ENCODE measurements at regions of chr9 and their contacts with region 1.

Region 1: GRCh38 chr9:118459913-118460312 is 755.7 kb downstream of the TLR4 start:
- DNase-seq: peak in 1 of 2 donors; percentile 6
- ATAC-seq: peak in 7 of 8 donors; percentile 59 to 94 (median 66)
- H3K4me3 ChIP-seq: no peak overlapping the region
- H3K27ac ChIP-seq: peak overlapping the region in 2 of 10 donors; percentile 33 to 39
- H3K4me1 ChIP-seq: no peaks in the 10 kb centered on the region
- H3K27me3 ChIP-seq: no peaks in the 10 kb centered on the region
- CTCF ChIP-seq: no peak

Region 2: DNA sequence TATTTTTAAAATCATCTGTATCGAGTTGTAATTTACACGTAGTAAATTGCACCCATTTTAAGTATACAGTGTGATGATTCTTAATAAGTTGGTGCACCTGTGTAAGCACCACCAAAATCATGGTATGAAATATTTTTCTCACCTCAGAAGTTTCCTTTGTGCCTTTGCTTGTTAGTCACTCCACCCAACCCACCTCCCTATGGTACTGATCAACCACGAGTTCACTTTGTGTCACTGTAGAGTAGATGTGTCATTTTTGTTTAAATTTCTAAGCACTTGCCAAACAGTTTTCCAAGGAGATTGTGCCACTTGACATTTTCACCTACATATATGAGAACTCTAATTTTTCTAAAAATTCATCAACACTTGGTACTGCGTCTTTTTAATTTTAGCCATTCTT is 50.8 kb after region 1 on chr9:
- intact Hi-C with region 1: loop called in 1 of 10 experiments (anchors 10 kb)
- DNase-seq: no peak
- ATAC-seq: no peak
- H3K4me3 ChIP-seq: no peak overlapping the region
- H3K27ac ChIP-seq: no peak overlapping the region
- H3K4me1 ChIP-seq: no peaks in the 10 kb centered on the region
- H3K27me3 ChIP-seq: no peaks in the 10 kb centered on the region
- CTCF ChIP-seq: no peak

Region 3: GRCh38 chr9:118529210-118529609 is 69.3 kb after region 1 on chr9:
- intact Hi-C with region 1: no loop called
- DNase-seq: peak in 1 of 2 donors; percentile 32
- ATAC-seq: peak; percentile 38 to 96 (median 84)
- H3K4me3 ChIP-seq: no peak overlapping the region
- H3K27ac ChIP-seq: peak overlapping the region in 7 of 10 donors; percentile 7 to 69 (median 50)
- H3K4me1 ChIP-seq: peaks cover 0 to 22% (median 11%) of the 10 kb centered on the region in 9 donors
- H3K27me3 ChIP-seq: no peaks in the 10 kb centered on the region
- CTCF ChIP-seq: no peak

Measured in heart right ventricle (tissue), 16 donors.